Cardiac septum (tissue), 1 donor: ENCODE measurements at regions of chr1 and their contacts with region 1.

Region 1: GRCh38 chr1:225817611-225818061 is 7.7 kb downstream of the EPHX1 start:
- DNase-seq: peak; percentile 83

Region 2: GRCh38 chr1:225834417-225835329 is 17.0 kb after region 1 on chr1:
- intact Hi-C with region 1: loop called (anchors 2 kb)
- DNase-seq: no peak

Region 3: DNA sequence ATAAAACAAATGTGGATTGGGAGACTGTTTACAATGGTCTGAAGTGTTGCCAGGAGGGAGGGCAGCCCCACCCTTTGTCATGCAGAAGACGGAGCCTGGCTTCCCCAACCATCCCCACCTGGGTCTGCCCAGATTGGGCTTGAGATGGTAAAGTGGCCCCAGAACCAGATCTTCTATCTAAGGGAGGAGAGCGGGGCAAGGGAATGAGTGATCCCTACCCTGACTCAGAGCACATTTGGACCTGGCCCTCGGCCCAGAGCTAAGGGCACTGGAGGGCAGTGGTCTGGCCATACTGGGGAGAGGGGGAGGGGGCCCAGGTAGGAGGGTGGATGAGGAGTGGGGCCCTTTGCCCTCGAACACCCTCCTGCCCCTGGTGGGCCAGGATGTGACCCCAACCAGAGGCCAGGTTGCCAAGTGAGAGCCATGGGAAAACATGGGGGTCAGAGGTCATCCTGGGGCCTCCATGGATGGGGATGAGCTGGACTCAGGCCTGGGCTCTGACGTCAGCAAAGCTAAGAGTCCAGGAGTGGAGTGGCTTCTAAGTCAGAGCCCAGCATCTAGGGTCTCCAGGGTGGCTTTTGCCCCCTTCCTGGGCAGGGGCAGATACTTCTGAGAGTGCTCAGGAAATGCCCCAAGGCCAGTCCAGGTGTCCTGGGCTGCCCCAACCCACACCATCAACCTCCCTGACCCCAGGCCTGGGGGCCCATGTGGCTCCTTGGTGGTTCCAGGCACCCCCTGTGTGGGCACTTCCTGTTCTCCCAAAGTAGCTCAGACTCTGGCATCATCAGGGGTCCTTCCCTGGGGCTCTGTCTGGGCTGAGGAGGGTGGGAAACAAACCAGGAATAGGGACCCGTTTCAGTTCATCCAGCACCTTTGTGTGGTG is 73.0 kb after region 1 on chr1:
- intact Hi-C with region 1: no loop called
- DNase-seq: no peak

Region 4: DNA sequence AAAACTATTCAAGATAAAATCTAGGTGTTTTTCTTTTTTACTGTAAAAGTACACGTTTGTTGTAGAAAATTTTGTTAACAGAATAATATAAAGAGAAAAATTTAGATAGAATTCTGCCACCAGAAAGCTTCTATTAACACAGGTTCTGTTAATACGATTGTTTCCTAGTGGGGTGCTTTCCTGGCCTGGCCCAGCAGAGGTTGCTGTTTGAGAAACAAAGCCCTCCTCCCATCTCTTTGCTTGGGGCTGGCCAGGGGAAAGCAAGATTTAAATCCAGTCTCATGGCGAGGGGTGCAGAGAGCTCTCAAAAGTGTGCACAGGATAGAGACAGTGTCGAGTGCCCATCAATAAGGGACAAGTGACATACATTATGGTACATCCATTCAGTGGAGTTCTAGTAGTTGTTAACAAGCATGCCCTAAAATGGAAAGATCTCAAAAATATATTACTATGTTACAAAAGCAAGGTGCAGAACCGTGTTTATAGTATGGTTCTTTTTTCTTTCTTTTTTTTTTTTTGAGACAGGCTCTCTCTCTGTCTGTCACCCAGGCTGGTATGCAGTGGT is 383.5 kb after region 1 on chr1:
- intact Hi-C with region 1: no loop called
- DNase-seq: no peak